Right ventricle myocardium inferior (tissue), 1 donor: ENCODE measurements at regions of chr19 and their contacts with region 1.

Region 1: DNA sequence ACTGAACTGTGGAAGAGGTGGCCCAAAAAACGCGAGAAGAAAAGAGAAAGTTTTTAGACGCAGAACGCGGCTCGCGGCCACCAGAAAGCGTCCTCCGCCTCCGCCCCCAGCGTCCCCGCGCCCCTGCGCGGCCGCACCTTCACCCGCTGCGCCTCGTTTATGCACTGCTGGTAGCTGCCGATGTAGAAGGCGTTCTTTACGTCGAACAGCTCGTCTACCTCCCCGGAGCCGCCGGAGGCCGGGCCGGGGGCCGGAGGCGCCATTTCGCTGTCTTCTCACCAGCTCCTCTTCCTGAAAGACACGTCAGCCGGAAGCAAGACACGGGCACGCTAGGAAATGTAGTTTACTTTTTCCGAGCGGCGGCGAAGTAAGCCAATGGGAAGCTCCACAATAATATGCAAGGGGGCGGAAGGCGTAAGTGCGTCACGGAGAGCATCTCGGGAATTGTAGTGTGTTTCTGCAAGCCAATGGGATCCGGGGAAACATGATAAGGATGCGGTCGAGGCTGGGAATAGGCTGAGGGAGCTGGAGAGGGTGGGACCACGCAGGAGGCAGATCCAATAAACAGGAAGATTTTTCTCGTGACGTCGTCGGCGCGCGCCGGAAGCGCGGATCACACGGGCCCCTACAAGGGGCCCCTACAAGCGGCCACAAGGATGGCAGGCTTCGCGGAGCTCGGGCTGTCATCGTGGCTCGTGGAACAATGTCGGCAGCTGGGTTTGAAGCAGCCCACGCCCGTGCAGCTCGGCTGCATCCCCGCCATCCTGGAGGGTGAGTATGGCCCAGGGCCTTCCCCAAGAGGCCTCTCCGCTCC is at the starts of genes COPE and DDX49:
- DNase-seq: peak; percentile 98
- ATAC-seq: peak; percentile 99
- total RNA-seq, gene COPE: 139 TPM
- total RNA-seq, gene DDX49: 25.6 TPM

Region 2: GRCh38 chr19:18571564-18572300 is 347.6 kb before region 1 on chr19 and contains the start of gene UBA52:
- intact Hi-C with region 1: loop called (anchors 1 kb)
- DNase-seq: peak; percentile 98
- ATAC-seq: peak; percentile 96
- total RNA-seq, gene UBA52: 737 TPM